A549 (cell line): ENCODE measurements at regions of chr16 and their contacts with region 1.

Region 1: DNA sequence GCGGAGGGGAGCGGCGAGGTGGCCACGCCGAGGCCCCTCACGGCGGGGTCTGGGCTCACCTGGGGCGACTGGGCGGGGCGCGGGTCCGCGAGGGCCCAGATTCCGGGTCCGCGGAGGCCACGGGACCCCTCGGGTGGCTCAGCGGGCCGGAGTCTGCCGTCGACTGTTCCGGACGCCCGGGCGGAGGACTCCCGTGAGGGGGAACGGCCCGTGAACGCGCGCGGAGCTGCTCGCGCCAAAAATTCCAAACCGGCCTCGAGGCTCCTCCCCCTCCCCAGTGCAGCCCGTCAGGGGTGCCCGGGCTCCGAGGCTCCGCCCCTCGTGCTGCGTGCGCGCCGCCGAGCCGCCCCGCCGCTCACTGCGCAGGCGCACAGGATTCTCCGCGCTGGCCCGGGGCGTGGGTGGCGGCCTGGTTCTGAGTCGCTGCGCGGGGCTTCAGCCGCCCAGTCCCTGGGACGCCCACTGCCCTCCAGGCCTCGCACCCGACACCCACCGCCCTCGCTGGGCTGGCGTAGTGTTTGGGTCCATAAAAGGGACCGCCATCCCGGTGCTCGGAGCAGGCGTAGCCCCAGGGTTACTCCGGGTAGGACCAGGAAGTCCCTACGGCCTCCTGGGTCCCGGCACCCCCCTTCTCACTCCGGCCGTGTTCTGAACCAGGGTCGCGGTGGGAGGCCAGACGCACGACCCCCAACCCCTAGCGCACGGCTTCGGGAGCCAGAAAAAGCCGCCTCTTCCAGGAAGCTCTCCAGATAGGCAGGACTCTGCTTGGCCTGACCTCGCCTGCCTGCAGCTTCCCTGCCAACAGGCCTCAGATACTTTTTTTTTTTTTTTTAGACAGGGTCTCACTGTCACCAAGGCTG is at the start of gene PKMYT1:
- DNase-seq: peak; percentile 85 to 98
- ATAC-seq: peak; percentile 70 to 82
- H3K4me3 ChIP-seq: peak within 1 kb of the TSS; percentile 71
- H3K27ac ChIP-seq: peak within 1 kb of the TSS; percentile 91 to 95
- H3K4me1 ChIP-seq: peaks cover 18% of the 10 kb centered on the region; the same call in 2 of the 3 replicates
- CTCF ChIP-seq: no peak
- EP300 ChIP-seq: no peak
- POLR2A ChIP-seq: peak; percentile 92
- RAD21 ChIP-seq: no peak
- polyA plus RNA-seq, gene PKMYT1: 8.4 and 10.5 TPM in 2 replicates

Region 2: GRCh38 chr16:2968738-2969544 is 11.5 kb before region 1 on chr16 and contains the start of gene PAQR4:
- CTCF ChIA-PET with region 1: interaction called, 27 read pairs
- POLR2A ChIA-PET with region 1: interaction called, 13 read pairs
- DNase-seq: peak; percentile 84 to 91
- ATAC-seq: peak; percentile 68 to 74
- H3K4me3 ChIP-seq: peak within 1 kb of the TSS; percentile 97
- H3K27ac ChIP-seq: peak within 1 kb of the TSS; percentile 84 to 91
- H3K4me1 ChIP-seq: peaks cover 17% of the 10 kb centered on the region
- CTCF ChIP-seq: no peak
- EP300 ChIP-seq: no peak
- POLR2A ChIP-seq: no peak; the same call in 1 of the 2 replicates
- RAD21 ChIP-seq: no peak
- polyA plus RNA-seq, gene PAQR4: 8.0 and 9.0 TPM in 2 replicates